ENCODE measurements at regions of chr6 and their contacts with region 1.

Region 1: GRCh38 chr6:13336553-13336952 is 8.2 kb upstream of the TBC1D7 start:
- DNase-seq: peak; percentile 84
- ATAC-seq: peak; percentile 98
- H3K4me3 ChIP-seq: no peak overlapping the region
- H3K27ac ChIP-seq: no peak overlapping the region
- H3K4me1 ChIP-seq: no peaks in the 10 kb centered on the region
- H3K27me3 ChIP-seq: no peaks in the 10 kb centered on the region
- CTCF ChIP-seq: peak; percentile 93
- POLR2A ChIP-seq: 0 out of 2 replicates have a peak, but pooled peaks have one; percentile 41
- RAD21 ChIP-seq: peak; percentile 98

Region 2: GRCh38 chr6:12637960-12638641 is 698.5 kb before region 1 on chr6:
- CTCF ChIA-PET with region 1: no interaction called
- POLR2A ChIA-PET with region 1: no interaction called
- dilution Hi-C with region 1: no loop called
- in situ Hi-C with region 1: no loop called
- intact Hi-C with region 1: loop called (anchors 10 kb)
- DNase-seq: peak; percentile 31
- ATAC-seq: peak; percentile 69; the same call in 1 of the 2 replicates
- H3K4me3 ChIP-seq: no peak overlapping the region
- H3K27ac ChIP-seq: no peak overlapping the region
- H3K4me1 ChIP-seq: no peaks in the 10 kb centered on the region
- H3K27me3 ChIP-seq: no peaks in the 10 kb centered on the region
- CTCF ChIP-seq: peak; percentile 57
- POLR2A ChIP-seq: no peak
- RAD21 ChIP-seq: peak; percentile 54

Region 3: GRCh38 chr6:13234130-13234529 is 102.4 kb before region 1 on chr6:
- CTCF ChIA-PET with region 1: no interaction called
- POLR2A ChIA-PET with region 1: no interaction called
- dilution Hi-C with region 1: no loop called
- in situ Hi-C with region 1: no loop called
- intact Hi-C with region 1: no loop called
- DNase-seq: no peak
- ATAC-seq: no peak
- H3K4me3 ChIP-seq: no peak overlapping the region
- H3K27ac ChIP-seq: no peak overlapping the region
- H3K4me1 ChIP-seq: no peaks in the 10 kb centered on the region
- H3K27me3 ChIP-seq: peaks cover 1% of the 10 kb centered on the region; the same call in 1 of the 2 replicates
- CTCF ChIP-seq: no peak
- POLR2A ChIP-seq: no peak
- RAD21 ChIP-seq: no peak

Region 4: GRCh38 chr6:13383328-13384163 is 47.0 kb after region 1 on chr6:
- CTCF ChIA-PET with region 1: no interaction called
- POLR2A ChIA-PET with region 1: no interaction called
- dilution Hi-C with region 1: no loop called
- in situ Hi-C with region 1: no loop called
- intact Hi-C with region 1: loop called (anchors 1 kb)
- DNase-seq: peak; percentile 54
- ATAC-seq: peak; percentile 79
- H3K4me3 ChIP-seq: no peak overlapping the region
- H3K27ac ChIP-seq: no peak overlapping the region
- H3K4me1 ChIP-seq: no peaks in the 10 kb centered on the region
- H3K27me3 ChIP-seq: no peaks in the 10 kb centered on the region
- CTCF ChIP-seq: peak; percentile 29
- POLR2A ChIP-seq: no peak
- RAD21 ChIP-seq: peak; percentile 30

Region 5: DNA sequence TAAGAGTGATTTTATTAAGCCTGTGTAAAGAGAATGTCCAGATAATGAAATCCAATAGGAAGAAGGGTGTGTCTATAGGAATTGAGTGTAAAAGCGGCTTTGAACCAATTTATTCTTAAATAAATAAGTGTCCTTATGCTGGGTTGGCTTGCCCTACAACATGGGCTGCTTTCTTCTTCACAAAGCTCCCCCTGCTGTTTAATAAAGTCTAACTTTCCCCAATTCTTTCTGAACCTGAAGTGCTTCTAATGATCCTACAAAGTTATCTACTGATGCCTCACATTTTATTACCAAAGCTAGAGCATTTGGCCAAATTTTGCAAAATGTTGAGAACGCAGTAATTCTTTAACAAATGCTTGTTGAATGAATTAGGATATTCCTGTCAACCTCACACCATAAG is 201.5 kb after region 1 on chr6:
- CTCF ChIA-PET with region 1: interaction called, 5 read pairs
- POLR2A ChIA-PET with region 1: no interaction called
- dilution Hi-C with region 1: no loop called
- in situ Hi-C with region 1: loop called (anchors 5 kb)
- intact Hi-C with region 1: loop called (anchors 1 kb)
- DNase-seq: peak; percentile 61
- ATAC-seq: peak; percentile 60
- H3K4me3 ChIP-seq: no peak overlapping the region
- H3K27ac ChIP-seq: no peak overlapping the region
- H3K4me1 ChIP-seq: no peaks in the 10 kb centered on the region
- H3K27me3 ChIP-seq: peaks cover 9% of the 10 kb centered on the region
- CTCF ChIP-seq: peak; percentile 57
- POLR2A ChIP-seq: no peak
- RAD21 ChIP-seq: peak; percentile 66

Region 6: GRCh38 chr6:13614926-13615798 is 278.6 kb after region 1 on chr6 and contains the start of gene NOL7:
- CTCF ChIA-PET with region 1: no interaction called
- POLR2A ChIA-PET with region 1: no interaction called
- dilution Hi-C with region 1: no loop called
- in situ Hi-C with region 1: no loop called
- intact Hi-C with region 1: loop called (anchors 1 kb)
- DNase-seq: peak; percentile 99
- ATAC-seq: peak; percentile 93
- H3K4me3 ChIP-seq: peak within 1 kb of the TSS; percentile 64
- H3K27ac ChIP-seq: peak within 1 kb of the TSS; percentile 75
- H3K4me1 ChIP-seq: peaks cover 5% of the 10 kb centered on the region; the same call in 1 of the 2 replicates
- H3K27me3 ChIP-seq: no peaks in the 10 kb centered on the region
- CTCF ChIP-seq: peak; percentile 98
- POLR2A ChIP-seq: peak; percentile 83
- RAD21 ChIP-seq: 0 out of 2 replicates have a peak, but pooled peaks have one; percentile 0
- total RNA-seq, gene NOL7: 21.3 and 60.8 TPM in 2 replicates